Left lung (tissue), 14 donors: ENCODE measurements at regions of chr13 and their contacts with region 1.

Region 1: GRCh38 chr13:100514788-100515409 is 73.7 kb downstream of the GGACT start:
- DNase-seq: peak; percentile 80 to 88 (median 84)
- ATAC-seq: peak; percentile 98
- H3K4me3 ChIP-seq: no peak overlapping the region
- H3K27ac ChIP-seq: no peak overlapping the region
- H3K4me1 ChIP-seq: peaks cover 0 to 18% of the 10 kb centered on the region in 2 donors
- H3K27me3 ChIP-seq: no peaks in the 10 kb centered on the region
- CTCF ChIP-seq: peak; percentile 89 to 91

Region 2: DNA sequence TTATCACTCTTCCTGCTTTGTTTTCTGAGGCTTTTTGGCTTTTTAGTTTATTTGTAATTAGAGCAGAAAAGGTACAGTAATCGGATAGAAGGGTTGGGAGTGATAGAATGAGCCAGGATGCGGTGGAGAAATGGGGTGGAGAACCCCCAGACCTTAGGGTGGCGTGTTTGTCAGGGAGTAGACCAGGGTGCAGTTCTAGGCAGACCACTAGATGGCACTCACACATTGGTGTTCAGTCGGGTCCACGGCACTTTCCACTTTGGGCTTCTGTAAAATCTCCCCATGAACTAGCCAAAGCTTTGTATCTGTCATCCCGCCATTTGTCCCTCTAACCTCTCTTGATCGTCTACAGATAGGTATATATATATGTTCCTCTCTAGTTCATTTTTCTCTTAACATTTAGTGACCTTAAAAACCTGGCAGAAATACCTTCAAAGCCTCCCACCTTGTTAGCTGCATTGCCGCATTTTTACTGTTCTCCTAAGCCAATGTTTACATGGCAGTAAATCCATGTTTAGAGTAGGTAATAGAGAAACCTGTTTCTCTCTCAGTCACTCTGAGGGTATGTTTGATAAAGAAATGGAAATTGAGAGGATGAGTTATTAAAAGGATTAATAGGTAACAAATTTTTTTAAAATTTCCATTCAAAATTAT is 858.7 kb before region 1 on chr13:
- intact Hi-C with region 1: loop called in 1 of 2 experiments (anchors 10 kb)
- DNase-seq: peak in 3 of 4 donors; percentile 60 to 81 (median 73)
- ATAC-seq: peak; percentile 89
- H3K4me3 ChIP-seq: no peak overlapping the region
- H3K27ac ChIP-seq: no peak overlapping the region
- H3K4me1 ChIP-seq: peaks cover 5 to 16% of the 10 kb centered on the region in 2 donors
- H3K27me3 ChIP-seq: peaks cover 4 to 25% of the 10 kb centered on the region in 2 donors
- CTCF ChIP-seq: peak; percentile 79 to 83

Region 3: DNA sequence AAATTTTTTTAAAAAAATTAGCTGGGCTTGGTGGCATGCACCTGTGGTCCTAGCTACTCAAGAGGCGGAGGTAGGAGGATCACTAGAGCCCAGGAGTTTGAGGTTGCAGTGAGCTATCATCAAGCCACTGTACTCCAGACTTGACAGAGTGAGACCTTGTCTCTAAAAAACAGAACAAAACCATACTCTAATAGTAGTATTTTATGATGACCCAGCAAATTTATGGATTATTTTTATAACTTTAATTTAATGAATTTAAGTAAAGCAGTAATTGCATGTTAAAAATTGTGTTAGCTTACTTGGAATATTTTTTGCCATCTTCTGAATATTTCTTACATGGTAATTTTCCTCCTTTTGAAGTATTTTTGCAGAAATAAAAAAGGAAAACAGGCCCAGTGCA is 485.0 kb before region 1 on chr13:
- intact Hi-C with region 1: no loop called
- DNase-seq: no peak
- ATAC-seq: no peak
- H3K4me3 ChIP-seq: no peak overlapping the region
- H3K27ac ChIP-seq: no peak overlapping the region
- H3K4me1 ChIP-seq: no peaks in the 10 kb centered on the region
- H3K27me3 ChIP-seq: no peaks in the 10 kb centered on the region
- CTCF ChIP-seq: no peak

Region 4: DNA sequence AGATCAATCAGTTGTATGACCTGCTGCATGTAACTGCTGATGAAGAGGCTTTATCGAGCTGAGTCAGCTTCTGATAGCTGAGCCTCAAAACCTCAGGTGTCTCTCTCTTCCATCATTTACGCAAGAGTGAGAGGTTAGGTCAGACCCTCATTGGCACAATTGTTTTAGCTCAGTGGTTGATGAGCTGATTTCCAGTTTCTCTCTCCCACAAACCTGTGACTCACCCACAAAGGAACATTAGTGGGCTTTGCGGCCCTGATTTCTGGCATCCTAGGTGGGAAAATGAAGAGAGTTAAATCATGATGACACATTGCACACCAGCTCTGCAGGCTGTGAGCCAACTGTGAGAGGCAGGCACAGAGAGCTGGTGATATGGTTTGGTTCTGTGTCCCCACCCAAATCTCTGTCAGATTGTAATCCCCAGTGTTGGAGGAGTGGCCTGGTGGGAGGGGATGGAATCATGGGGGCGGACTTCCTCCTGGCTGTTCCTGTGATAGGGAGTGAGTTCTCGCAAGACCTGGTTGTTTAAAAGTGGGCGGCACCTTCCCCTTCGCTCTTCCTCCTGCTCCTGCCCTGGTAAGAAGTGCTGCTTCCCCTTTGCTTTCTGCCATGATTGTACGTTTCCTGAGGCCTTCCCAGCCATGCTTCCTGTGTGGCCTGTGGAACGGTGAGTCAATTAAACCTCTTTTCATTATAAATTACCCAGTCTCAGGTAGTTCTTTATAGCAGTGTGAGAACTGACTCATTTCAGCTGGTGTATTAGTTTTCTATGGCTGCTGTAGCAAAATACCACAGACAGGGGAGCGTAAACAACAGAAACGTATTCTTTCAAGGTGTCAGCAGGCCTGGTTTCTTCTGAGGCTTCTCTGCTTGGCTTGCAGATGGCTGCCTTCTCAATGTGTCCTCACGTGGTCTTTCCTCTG is 193.2 kb after region 1 on chr13:
- intact Hi-C with region 1: no loop called
- DNase-seq: no peak
- ATAC-seq: no peak
- H3K4me3 ChIP-seq: no peak overlapping the region
- H3K27ac ChIP-seq: no peak overlapping the region
- H3K4me1 ChIP-seq: no peaks in the 10 kb centered on the region
- H3K27me3 ChIP-seq: no peaks in the 10 kb centered on the region
- CTCF ChIP-seq: no peak

Region 5: DNA sequence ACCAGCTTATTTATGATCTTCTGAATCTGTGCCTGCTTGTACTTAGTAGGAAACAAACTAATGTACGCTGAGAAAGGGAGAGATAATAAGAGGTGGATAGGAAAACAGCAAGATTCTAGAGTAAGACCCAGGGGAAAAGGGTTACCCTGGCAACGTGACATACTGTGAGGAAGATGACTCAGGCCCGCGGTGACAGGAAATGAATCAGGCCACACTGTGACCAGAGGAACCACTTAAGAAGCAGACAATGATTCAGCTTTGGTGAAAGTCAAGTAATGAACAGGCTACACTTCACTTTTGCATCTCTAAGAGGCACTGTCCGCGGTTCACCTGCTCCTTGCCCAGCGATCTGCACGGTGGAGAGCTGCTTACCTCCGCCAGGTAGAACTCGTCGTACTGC is 743.2 kb after region 1 on chr13:
- intact Hi-C with region 1: no loop called
- DNase-seq: no peak
- ATAC-seq: no peak
- H3K4me3 ChIP-seq: no peak overlapping the region
- H3K27ac ChIP-seq: no peak overlapping the region
- H3K4me1 ChIP-seq: no peaks in the 10 kb centered on the region
- H3K27me3 ChIP-seq: no peaks in the 10 kb centered on the region
- CTCF ChIP-seq: no peak